ENCODE measurements at regions of chr11 and their contacts with region 1.

Region 1: DNA sequence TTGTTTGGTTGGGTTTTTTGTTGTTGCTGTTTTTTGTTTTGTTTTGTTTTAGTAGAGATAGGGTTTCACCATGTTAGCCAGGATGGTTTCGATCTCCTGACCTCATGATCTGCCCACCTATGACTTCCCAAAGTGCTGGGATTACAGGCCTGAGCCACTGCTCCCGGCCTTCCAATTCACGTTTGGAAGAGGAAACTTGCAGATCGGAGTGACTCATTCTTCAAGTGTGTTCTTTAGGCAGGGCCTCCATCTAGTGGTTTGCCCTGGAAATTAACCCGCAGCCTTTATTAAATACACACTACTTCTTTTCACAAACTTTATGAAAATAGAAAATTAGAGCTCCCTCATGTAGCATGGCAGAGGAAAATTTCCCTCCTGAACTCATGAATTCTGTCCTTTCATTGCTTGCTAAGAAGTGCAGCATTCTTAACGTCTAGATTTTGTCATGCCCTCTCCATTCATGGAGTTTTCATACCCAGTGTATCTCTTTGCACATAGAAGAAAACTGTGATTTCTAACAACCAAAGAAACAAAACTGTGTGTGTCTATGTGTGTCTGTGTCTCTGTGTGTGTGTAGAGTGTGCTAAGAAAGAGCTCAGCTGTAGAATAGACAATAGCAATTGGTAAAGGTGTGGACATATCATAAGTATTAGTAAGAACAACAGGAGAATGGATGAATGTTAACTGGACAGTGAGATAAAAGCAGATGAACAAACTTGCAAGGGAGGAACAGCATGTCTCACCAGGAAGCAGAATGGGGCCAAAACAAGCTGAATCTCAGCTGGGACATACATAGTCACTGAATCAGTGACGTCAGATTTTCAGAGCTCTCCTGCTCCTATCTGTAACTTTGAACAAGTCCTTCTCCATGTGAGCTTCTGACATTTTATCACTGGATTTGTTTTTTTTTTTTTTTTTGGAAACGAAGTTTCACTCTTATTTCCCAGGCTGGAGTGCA is 118.4 kb downstream of the BBOX1 start:
- DNase-seq: no peak
- H3K4me3 ChIP-seq: no peak overlapping the region
- H3K27ac ChIP-seq: no peak overlapping the region
- H3K4me1 ChIP-seq: no peaks in the 10 kb centered on the region
- H3K27me3 ChIP-seq: no peaks in the 10 kb centered on the region
- CTCF ChIP-seq: peak; percentile 77

Region 2: GRCh38 chr11:26297189-26297975 is 861.6 kb before region 1 on chr11:
- intact Hi-C with region 1: loop called (anchors 10 kb)
- DNase-seq: no peak
- H3K4me3 ChIP-seq: no peak overlapping the region
- H3K27ac ChIP-seq: no peak overlapping the region
- H3K4me1 ChIP-seq: no peaks in the 10 kb centered on the region
- H3K27me3 ChIP-seq: peaks cover 10% of the 10 kb centered on the region
- CTCF ChIP-seq: peak; percentile 69

Region 3: GRCh38 chr11:26753723-26754504 is 405.1 kb before region 1 on chr11:
- intact Hi-C with region 1: loop called (anchors 5 kb)
- DNase-seq: no peak
- H3K4me3 ChIP-seq: no peak overlapping the region
- H3K27ac ChIP-seq: no peak overlapping the region
- H3K4me1 ChIP-seq: peaks cover 4% of the 10 kb centered on the region
- H3K27me3 ChIP-seq: no peaks in the 10 kb centered on the region
- CTCF ChIP-seq: peak; percentile 74

Measured in left ventricle myocardium inferior (tissue), 1 donor.